Activated naive CD4-positive, alpha-beta T cell treated with anti-CD3 and anti-CD28 coated beads for 36 hours (primary cell): ENCODE measurements at regions of chr16 and their contacts with region 1.

Region 1: DNA sequence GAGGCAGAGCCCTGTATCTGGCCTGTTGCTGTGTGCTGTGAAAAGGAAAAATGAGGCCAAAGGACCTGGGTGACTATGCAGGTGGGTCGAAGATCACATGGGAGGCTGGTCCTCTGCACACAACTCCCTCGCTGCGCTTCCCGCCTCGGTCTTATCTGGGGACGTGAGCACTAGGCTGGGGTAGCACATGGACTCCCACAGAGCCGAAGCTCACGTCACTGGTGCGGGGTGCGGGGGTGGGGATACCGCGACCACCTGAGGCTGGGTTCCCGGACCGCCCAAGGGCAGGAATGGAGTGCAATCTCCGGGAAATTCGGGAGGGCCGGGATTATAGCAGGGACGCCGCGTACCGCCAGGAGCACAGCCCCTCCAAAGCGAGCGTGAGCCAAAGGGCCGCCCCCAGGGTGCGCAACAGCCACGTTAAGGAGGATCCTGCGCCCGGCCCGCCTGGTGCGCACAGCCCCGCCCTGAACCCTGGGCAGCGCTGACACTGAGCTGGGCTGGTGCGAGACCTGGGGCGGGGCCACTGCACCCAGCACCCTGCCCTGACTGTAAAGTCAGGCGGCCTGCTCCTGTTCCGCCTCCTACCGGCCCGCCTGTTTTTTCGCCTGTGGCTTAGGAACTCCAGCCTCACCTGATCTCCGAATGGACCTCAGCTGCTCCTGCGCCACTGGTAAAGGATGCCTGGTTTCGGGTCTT is 4.8 kb downstream of the MT1A start:
- DNase-seq: peak; percentile 87
- H3K4me3 Mint-ChIP-seq: peak overlapping the region; percentile 46
- H3K27ac Mint-ChIP-seq: peak overlapping the region; percentile 9
- H3K4me1 Mint-ChIP-seq: peaks cover 21% of the 10 kb centered on the region
- H3K27me3 Mint-ChIP-seq: peaks cover 40% of the 10 kb centered on the region

Region 2: GRCh38 chr16:56513972-56514371 is 129.3 kb before region 1 on chr16:
- CTCF ChIA-PET with region 1: interaction called, 3 read pairs
- intact Hi-C with region 1: loop called (anchors 2 kb)
- DNase-seq: peak; percentile 76
- H3K4me3 Mint-ChIP-seq: no peak overlapping the region
- H3K27ac Mint-ChIP-seq: no peak overlapping the region
- H3K4me1 Mint-ChIP-seq: peaks cover 41% of the 10 kb centered on the region
- H3K27me3 Mint-ChIP-seq: no peaks in the 10 kb centered on the region

Region 3: DNA sequence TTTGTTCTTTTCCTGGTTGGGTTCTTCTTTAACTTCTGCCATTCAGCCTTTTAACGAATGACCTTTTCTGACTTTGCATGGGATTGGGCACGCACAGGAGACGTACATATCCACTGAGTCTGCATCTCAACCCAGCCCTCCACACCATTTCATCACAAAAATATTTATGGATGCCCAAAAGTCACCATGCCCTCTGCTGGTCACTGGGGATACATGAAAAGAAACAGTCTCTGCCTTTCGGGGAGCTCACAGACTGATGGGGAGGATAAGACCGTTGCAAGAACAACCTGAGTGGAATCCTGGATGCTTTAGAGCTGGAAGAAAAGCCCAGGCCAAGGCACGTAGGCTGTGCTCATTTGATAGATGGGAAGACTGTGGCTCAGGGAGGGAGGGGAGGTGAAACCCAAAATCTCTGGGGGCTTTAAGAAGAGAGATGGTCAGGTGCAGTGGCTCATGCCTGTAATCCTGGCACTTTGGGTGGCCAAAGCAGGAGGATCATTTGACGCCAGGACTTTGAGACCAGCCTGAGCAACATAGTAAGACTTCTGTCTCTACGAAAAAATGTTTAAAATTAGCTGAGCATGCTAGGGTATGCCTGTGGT is 42.7 kb before region 1 on chr16:
- CTCF ChIA-PET with region 1: interaction called, 6 read pairs
- intact Hi-C with region 1: loop called (anchors 1 kb)
- DNase-seq: peak; percentile 44
- H3K4me3 Mint-ChIP-seq: no peak overlapping the region
- H3K27ac Mint-ChIP-seq: no peak overlapping the region
- H3K4me1 Mint-ChIP-seq: peaks cover 4% of the 10 kb centered on the region
- H3K27me3 Mint-ChIP-seq: peaks cover 5% of the 10 kb centered on the region

Region 4: DNA sequence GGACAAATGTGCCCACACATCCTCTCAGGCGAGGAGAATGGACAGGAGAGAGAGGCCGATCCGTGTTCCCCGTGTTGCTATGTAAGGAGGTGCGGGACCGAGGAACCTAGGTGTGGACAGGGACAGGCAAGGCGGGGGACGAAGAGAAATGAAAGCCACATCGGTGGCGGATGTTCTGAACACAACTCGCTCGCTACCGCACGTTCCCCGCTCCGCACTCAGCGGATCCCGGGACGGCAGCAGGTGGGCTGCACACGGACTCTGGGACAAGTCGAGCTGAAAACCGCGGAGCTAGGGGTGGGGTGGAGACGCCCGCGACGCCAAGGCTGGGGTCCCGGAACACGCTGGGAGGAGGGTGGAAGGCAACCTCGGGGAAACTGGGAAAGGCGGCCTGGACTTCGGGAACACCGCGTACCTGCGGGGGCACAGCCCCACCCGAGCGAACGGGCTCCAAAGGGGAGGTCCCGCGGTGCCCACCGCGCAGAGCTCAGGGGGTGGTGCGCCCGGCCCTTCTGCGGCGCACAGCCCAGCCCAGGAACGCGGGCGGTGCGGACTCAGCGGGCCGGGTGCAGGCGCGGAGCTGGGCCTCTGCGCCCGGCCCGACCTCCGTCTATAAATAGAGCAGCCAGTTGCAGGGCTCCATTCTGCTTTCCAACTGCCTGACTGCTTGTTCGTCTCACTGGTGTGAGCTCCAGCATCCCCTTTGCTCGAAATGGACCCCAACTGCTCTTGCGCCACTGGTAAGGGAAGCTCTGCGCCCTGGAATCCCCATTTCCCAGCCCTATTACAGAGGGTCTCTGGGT is 17.9 kb before region 1 on chr16 and contains the start of gene MT1E:
- CTCF ChIA-PET with region 1: interaction called, 7 read pairs
- intact Hi-C with region 1: loop called (anchors 2 kb)
- DNase-seq: peak; percentile 61
- H3K4me3 Mint-ChIP-seq: peak within 1 kb of the TSS; percentile 76
- H3K27ac Mint-ChIP-seq: no peak within 1 kb of the TSS
- H3K4me1 Mint-ChIP-seq: peaks cover 14% of the 10 kb centered on the region
- H3K27me3 Mint-ChIP-seq: peaks cover 25% of the 10 kb centered on the region
- total RNA-seq, gene MT1E: 12.2 to 12.4 TPM

Region 5: GRCh38 chr16:56657555-56658326 is 14.5 kb after region 1 on chr16 and contains the start of gene MT1F:
- CTCF ChIA-PET with region 1: interaction called, 3 read pairs
- intact Hi-C with region 1: loop called (anchors 1 kb)
- DNase-seq: peak; percentile 83
- H3K4me3 Mint-ChIP-seq: peak within 1 kb of the TSS; percentile 91
- H3K27ac Mint-ChIP-seq: peak within 1 kb of the TSS; percentile 41
- H3K4me1 Mint-ChIP-seq: peaks cover 18% of the 10 kb centered on the region
- H3K27me3 Mint-ChIP-seq: no peaks in the 10 kb centered on the region
- total RNA-seq, gene MT1F: 5.4 to 6.4 TPM